BJ (cell line): ENCODE measurements at regions of chr3 and their contacts with region 1.

Region 1: DNA sequence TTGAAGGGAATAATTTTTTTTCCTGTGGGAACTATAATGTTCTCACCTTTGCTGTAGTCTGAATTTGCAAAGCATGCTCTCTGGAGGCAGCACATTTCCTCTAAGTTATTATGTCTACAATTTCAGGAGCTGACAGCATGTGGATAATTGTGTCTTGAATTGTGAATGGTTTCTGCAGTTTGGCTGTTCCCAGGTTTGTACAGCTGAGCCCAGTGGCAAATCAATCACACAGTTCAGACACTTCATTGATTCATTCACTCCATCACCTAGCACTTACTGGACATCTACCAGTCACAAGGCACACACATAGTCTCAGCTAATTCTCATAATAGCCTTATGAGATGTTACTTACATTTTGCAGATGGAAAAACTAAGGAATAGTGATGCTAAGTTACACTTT is 219.0 kb upstream of the ROPN1 start:
- DNase-seq: no peak
- H3K4me3 ChIP-seq: no peak overlapping the region
- H3K27me3 ChIP-seq: no peaks in the 10 kb centered on the region
- CTCF ChIP-seq: no peak

Region 2: GRCh38 chr3:123066896-123067688 is 1143.8 kb before region 1 on chr3 and contains the start of gene PDIA5:
- CTCF ChIA-PET with region 1: no interaction called
- POLR2A ChIA-PET with region 1: interaction called, 12 read pairs
- DNase-seq: peak; percentile 39
- H3K4me3 ChIP-seq: peak within 1 kb of the TSS; percentile 90
- H3K27me3 ChIP-seq: peaks cover 2% of the 10 kb centered on the region
- CTCF ChIP-seq: no peak
- polyA plus RNA-seq, gene PDIA5: 47.3 and 53.5 TPM in 2 replicates

Region 3: GRCh38 chr3:124221422-124221821 is 10.5 kb after region 1 on chr3:
- CTCF ChIA-PET with region 1: no interaction called
- POLR2A ChIA-PET with region 1: no interaction called
- DNase-seq: no peak
- H3K4me3 ChIP-seq: no peak overlapping the region
- H3K27me3 ChIP-seq: no peaks in the 10 kb centered on the region
- CTCF ChIP-seq: no peak